T-cell (primary cell): ENCODE measurements at regions of chr16 and their contacts with region 1.

Region 1: GRCh38 chr16:28531777-28532744 is 6.7 kb downstream of the NUPR1 start:
- DNase-seq: no peak
- ATAC-seq: no peak
- H3K4me3 ChIP-seq: no peak overlapping the region
- H3K4me3 Mint-ChIP-seq: no peak overlapping the region
- H3K27ac ChIP-seq: no peak overlapping the region
- H3K27ac Mint-ChIP-seq: peak overlapping the region in 1 of 2 donors; percentile 55
- H3K4me1 ChIP-seq: peaks cover 17 to 35% of the 10 kb centered on the region in 2 experiments
- H3K4me1 Mint-ChIP-seq: peaks cover 36 to 40% (median 37%) of the 10 kb centered on the region in 3 donors
- H3K27me3 ChIP-seq: peaks cover 0 to 2% of the 10 kb centered on the region in 2 experiments
- H3K27me3 Mint-ChIP-seq: no peaks in the 10 kb centered on the region

Region 2: DNA sequence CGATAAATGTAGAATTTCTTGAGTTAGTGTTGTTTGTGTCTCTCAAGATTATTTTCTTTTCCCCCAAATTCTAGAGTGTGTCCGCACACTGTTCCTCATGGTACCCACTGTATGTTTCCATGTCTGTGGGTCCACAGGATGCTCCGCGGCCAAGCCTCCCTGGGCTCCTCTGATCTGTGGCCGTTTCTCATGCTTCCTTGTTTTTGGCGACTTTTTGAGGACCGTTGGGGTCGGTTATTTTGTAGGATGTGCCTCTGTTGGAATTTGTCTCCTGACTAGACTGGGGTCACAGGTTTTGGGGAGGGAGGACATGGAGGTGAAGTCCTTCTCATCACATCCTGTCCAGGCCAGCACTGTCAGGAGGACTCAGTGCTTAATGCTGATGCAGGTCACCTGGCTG is 592.8 kb after region 1 on chr16:
- CTCF ChIA-PET with region 1: no interaction called
- POLR2A ChIA-PET with region 1: interaction called in 1 of 2 experiments, 10 read pairs
- DNase-seq: no peak
- ATAC-seq: no peak
- H3K4me3 ChIP-seq: no peak overlapping the region
- H3K4me3 Mint-ChIP-seq: no peak overlapping the region
- H3K27ac ChIP-seq: no peak overlapping the region
- H3K27ac Mint-ChIP-seq: no peak overlapping the region
- H3K4me1 ChIP-seq: peaks cover 3 to 4% of the 10 kb centered on the region in 2 experiments
- H3K4me1 Mint-ChIP-seq: peaks cover 19 to 31% (median 20%) of the 10 kb centered on the region in 3 donors
- H3K27me3 ChIP-seq: no peaks in the 10 kb centered on the region
- H3K27me3 Mint-ChIP-seq: no peaks in the 10 kb centered on the region